ENCODE measurements at regions of chr6 and their contacts with region 1.

Region 1: GRCh38 chr6:121816906-121817551 is 381.6 kb downstream of the GJA1 start:
- DNase-seq: no peak
- ATAC-seq: no peak
- H3K4me3 ChIP-seq: no peak overlapping the region
- H3K27ac ChIP-seq: no peak overlapping the region
- H3K4me1 ChIP-seq: no peaks in the 10 kb centered on the region
- H3K27me3 ChIP-seq: no peaks in the 10 kb centered on the region
- CTCF ChIP-seq: no peak

Region 2: GRCh38 chr6:121584586-121585369 is 232.3 kb before region 1 on chr6:
- intact Hi-C with region 1: loop called in 1 of 2 experiments (anchors 10 kb)
- DNase-seq: no peak
- ATAC-seq: peak in 2 of 4 donors; percentile 59 to 66
- H3K4me3 ChIP-seq: no peak overlapping the region
- H3K27ac ChIP-seq: no peak overlapping the region
- H3K4me1 ChIP-seq: peaks cover 6% of the 10 kb centered on the region
- H3K27me3 ChIP-seq: no peaks in the 10 kb centered on the region
- CTCF ChIP-seq: no peak

Measured in psoas muscle (tissue), 8 donors.